MCF 10A (cell line): ENCODE measurements at regions of chr17 and their contacts with region 1.

Region 1: GRCh38 chr17:81871387-81872230 is 472 bp upstream of the ARHGDIA start:
- DNase-seq: peak; percentile 89
- H3K4me3 Mint-ChIP-seq: peak overlapping the region; percentile 78
- H3K27ac Mint-ChIP-seq: peak overlapping the region; percentile 88
- H3K4me1 Mint-ChIP-seq: peaks cover 18% of the 10 kb centered on the region
- H3K27me3 Mint-ChIP-seq: no peaks in the 10 kb centered on the region
- CTCF ChIP-seq: peak; percentile 28

Region 2: DNA sequence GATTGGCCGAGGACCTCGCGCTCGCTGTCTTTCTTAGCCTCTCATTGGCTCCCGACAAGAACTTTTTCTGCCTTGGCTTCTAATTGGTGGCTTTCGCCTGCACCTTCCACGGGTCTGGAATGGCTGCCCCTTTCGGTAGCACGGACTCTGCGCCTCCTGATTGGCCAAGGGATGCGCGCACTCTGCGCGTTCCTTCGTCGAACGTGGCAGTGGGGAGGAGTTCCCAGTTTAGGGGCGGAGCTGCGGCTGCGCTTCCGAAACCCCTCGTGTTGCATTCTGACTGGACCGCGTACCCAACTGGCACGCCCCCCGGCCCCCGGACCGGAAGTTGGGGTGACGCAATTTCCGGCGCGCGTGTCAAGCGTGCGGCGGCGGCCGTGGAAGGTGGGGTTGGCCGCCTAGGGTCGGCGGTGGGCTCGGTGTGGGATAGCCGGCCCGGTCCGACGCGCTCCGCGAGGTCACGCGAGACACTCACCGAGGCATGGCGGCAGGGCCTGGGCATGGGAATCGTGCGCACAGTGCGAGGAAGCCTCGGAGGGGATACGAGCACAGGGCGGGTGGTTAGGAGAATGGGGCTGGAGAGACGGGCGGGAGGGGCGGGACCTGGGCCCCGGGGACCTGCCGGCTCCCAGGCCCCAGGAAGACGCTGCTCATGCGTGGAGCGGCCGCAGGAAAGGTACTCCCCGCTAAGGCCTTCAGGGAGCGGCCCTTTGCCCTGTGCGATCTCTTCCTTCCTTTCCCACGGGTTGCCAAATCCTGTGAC is 10.7 kb before region 1 on chr17:
- CTCF ChIA-PET with region 1: no interaction called
- POLR2A ChIA-PET with region 1: interaction called, 27 read pairs
- intact Hi-C with region 1: no loop called
- DNase-seq: peak; percentile 100
- H3K4me3 Mint-ChIP-seq: peak overlapping the region; percentile 89
- H3K27ac Mint-ChIP-seq: peak overlapping the region; percentile 98
- H3K4me1 Mint-ChIP-seq: peaks cover 33% of the 10 kb centered on the region
- H3K27me3 Mint-ChIP-seq: no peaks in the 10 kb centered on the region
- CTCF ChIP-seq: no peak

Region 3: DNA sequence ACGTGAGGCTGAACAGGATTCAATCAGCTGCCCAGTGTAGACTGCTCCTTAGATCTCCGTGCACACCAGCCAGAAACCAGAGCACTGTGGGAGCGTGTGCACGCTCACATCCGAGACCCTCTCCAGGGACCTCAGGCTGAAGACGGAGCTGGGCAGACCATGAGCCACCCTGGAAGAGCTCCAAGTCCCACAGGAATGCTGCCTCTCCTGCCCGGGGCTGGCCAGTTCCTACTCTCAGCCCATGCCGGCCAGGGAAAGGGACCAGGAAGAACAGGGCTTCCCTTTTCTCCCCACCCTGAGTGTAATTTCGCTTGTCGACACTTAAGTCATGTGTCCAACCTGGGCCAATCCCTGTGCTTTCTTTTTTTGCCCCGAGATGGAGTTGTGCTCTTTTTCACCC is 12.9 kb after region 1 on chr17:
- CTCF ChIA-PET with region 1: interaction called, 6 read pairs
- POLR2A ChIA-PET with region 1: interaction called, 21 read pairs
- intact Hi-C with region 1: no loop called
- DNase-seq: no peak
- H3K4me3 Mint-ChIP-seq: no peak overlapping the region
- H3K27ac Mint-ChIP-seq: peak overlapping the region; percentile 43
- H3K4me1 Mint-ChIP-seq: peaks cover 26% of the 10 kb centered on the region
- H3K27me3 Mint-ChIP-seq: no peaks in the 10 kb centered on the region
- CTCF ChIP-seq: no peak

Region 4: GRCh38 chr17:81890447-81891299 is 19.1 kb after region 1 on chr17:
- CTCF ChIA-PET with region 1: interaction called, 6 read pairs
- POLR2A ChIA-PET with region 1: interaction called, 21 read pairs
- intact Hi-C with region 1: no loop called
- DNase-seq: no peak
- H3K4me3 Mint-ChIP-seq: peak overlapping the region; percentile 91
- H3K27ac Mint-ChIP-seq: peak overlapping the region; percentile 96
- H3K4me1 Mint-ChIP-seq: peaks cover 22% of the 10 kb centered on the region
- H3K27me3 Mint-ChIP-seq: no peaks in the 10 kb centered on the region
- CTCF ChIP-seq: no peak

Region 5: DNA sequence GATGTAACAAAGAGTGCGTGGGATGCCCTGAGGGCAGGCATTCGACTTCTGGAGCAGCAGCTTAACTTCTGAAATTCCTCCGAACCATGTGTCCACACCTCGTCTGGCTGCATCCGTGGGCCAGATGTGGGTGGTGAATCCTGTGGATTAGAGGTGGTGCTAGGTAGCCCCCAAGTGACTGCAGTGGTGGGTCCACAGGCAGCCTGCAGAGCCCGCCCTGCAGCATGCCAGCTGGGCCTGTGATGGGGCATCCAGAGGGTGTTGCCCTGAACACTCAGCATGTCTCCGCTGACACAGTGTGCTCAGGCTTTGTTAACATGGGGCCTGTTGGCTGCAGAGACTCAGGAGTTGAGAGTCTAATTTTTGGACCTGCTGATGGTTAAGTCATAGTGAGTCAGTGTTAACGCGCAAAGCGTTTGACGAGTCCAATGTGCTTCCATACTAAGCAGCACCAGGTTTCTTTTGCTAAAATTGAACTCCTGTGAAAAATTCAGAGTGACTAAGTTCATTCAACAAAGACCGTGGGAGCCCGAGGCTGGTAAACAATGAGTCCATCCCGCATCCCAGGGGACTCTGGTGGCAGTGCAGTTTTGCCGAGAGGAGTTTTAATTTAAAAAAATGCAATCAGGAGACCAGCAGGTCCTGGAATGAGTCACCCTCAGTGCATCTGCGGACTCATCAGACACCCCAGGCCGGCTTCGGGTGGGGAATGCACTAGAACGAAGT is 26.7 kb after region 1 on chr17:
- CTCF ChIA-PET with region 1: no interaction called
- POLR2A ChIA-PET with region 1: interaction called, 14 read pairs
- intact Hi-C with region 1: no loop called
- DNase-seq: peak; percentile 79
- H3K4me3 Mint-ChIP-seq: peak overlapping the region; percentile 44
- H3K27ac Mint-ChIP-seq: peak overlapping the region; percentile 66
- H3K4me1 Mint-ChIP-seq: peaks cover 16% of the 10 kb centered on the region
- H3K27me3 Mint-ChIP-seq: no peaks in the 10 kb centered on the region
- CTCF ChIP-seq: no peak

Region 6: GRCh38 chr17:81917565-81918332 is 46.1 kb after region 1 on chr17 and contains the start of gene SIRT7:
- CTCF ChIA-PET with region 1: no interaction called
- POLR2A ChIA-PET with region 1: interaction called, 17 read pairs
- intact Hi-C with region 1: loop called (anchors 10 kb)
- DNase-seq: peak; percentile 75
- H3K4me3 Mint-ChIP-seq: peak within 1 kb of the TSS; percentile 87
- H3K27ac Mint-ChIP-seq: peak within 1 kb of the TSS; percentile 87
- H3K4me1 Mint-ChIP-seq: peaks cover 27% of the 10 kb centered on the region
- H3K27me3 Mint-ChIP-seq: no peaks in the 10 kb centered on the region
- CTCF ChIP-seq: no peak
- total RNA-seq, gene SIRT7: 36.6 and 44.8 TPM in 2 replicates